Activated T-helper 2 cell treated with anti-CD3 and anti-CD28 coated beads, Interferon-gamma antibody, Interleukin-2, Interleukin-4, amounts not matched to agents 10 μg/mL and 5 μg/mL and 100 μg/mL, durations not matched to agents 14 hours and 24 hours and 36 hours (primary cell): ENCODE measurements at regions of chr7 and their contacts with region 1.

Region 1: GRCh38 chr7:992709-993607 is 10.0 kb downstream of the CYP2W1 start:
- DNase-seq: peak; percentile 86
- H3K4me3 Mint-ChIP-seq: no peak overlapping the region
- H3K27ac Mint-ChIP-seq: no peak overlapping the region
- H3K4me1 Mint-ChIP-seq: peaks cover 2% of the 10 kb centered on the region
- H3K27me3 Mint-ChIP-seq: no peaks in the 10 kb centered on the region

Region 2: DNA sequence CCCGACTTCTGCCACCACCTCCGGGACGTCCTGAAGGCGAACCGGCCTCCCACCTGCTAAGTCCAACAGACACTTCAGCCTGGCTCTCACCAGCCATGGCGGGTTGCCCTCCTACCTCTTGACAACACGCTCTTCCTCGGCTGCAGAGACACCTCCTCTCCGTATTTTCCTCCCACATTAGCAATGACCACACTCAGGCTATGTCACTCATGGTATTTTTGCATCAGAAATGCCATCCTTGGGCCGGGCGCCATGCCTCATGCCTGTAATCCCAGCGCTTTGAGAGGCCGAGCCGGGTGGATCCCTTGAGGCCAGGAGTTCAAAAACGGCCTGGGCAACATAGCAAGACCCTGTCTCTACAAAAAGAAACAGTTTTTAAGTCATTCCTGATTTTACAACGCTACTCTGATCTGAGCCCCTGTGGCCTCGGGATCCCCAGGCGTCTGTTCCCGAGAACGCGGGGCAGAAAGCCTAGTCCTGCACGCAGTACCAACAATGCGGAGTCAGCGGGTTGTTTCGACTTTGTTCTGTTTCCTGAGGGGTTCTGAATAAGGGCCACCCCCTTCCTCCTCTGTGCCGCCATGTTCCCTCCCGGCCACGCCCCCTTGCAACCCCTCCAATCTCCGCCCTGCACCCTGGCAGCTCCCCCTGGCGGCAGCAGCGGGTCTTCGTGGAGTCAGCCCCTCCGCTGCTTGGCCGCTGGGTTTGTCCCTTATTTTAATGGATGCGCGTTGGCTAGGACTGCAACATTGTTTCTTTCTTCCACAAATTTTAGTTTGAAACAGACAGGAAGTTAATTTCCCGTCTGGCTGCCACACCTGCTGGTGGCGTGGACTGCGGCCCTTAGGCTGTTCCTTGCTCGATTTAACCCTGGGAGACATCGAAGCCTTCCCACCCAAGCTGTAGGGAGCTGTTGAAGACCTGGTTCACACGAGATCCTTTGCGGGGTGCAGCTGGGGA is 176.7 kb after region 1 on chr7:
- intact Hi-C with region 1: loop called (anchors 5 kb)
- DNase-seq: peak; percentile 86
- H3K4me3 Mint-ChIP-seq: peak overlapping the region; percentile 80
- H3K27ac Mint-ChIP-seq: peak overlapping the region; percentile 84
- H3K4me1 Mint-ChIP-seq: peaks cover 9% of the 10 kb centered on the region
- H3K27me3 Mint-ChIP-seq: no peaks in the 10 kb centered on the region